ENCODE measurements at regions of chr12 and their contacts with region 1.

Region 1: GRCh38 chr12:45543906-45544315 is 185.6 kb upstream of the ARID2 start:
- DNase-seq: no peak
- H3K4me3 ChIP-seq: no peak overlapping the region
- H3K27ac ChIP-seq: no peak overlapping the region
- H3K4me1 ChIP-seq: peaks cover 0 to 8% (median 3%) of the 10 kb centered on the region in 6 donors
- H3K27me3 ChIP-seq: no peaks in the 10 kb centered on the region
- CTCF ChIP-seq: peak; percentile 50 to 83 (median 73)
- POLR2A ChIP-seq: no peak

Region 2: DNA sequence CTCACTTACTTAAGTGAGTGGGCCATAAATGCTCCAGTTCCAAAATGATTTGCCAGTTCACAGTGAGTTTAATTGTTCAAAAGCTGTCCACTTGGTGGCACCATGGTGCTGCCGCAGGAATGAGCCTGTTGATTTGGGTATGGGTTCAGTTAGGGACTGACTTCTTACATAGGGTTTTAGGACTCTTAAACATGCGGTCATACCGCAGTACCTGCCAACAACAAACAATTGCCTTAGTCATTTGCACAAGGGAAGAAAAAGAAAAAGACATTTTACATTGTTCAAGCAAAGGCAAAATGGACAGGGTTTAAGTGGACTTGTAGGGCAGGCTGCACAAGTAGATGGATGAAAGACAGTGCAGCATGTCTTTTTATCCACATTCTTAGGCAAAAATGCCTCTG is 413.0 kb before region 1 on chr12:
- intact Hi-C with region 1: no loop called
- DNase-seq: no peak
- H3K4me3 ChIP-seq: no peak overlapping the region
- H3K27ac ChIP-seq: no peak overlapping the region
- H3K4me1 ChIP-seq: no peaks in the 10 kb centered on the region
- H3K27me3 ChIP-seq: peaks cover 0 to 9% (median 0%) of the 10 kb centered on the region in 7 donors
- CTCF ChIP-seq: peak in 5 of 11 experiments; percentile 17 to 30 (median 22)
- POLR2A ChIP-seq: no peak

Region 3: GRCh38 chr12:45713078-45713477 is 169.2 kb after region 1 on chr12:
- intact Hi-C with region 1: loop called (anchors 10 kb)
- DNase-seq: no peak
- H3K4me3 ChIP-seq: no peak overlapping the region
- H3K27ac ChIP-seq: no peak overlapping the region
- H3K4me1 ChIP-seq: peaks cover 0 to 15% (median 0%) of the 10 kb centered on the region in 6 donors
- H3K27me3 ChIP-seq: no peaks in the 10 kb centered on the region
- CTCF ChIP-seq: no peak
- POLR2A ChIP-seq: no peak

Region 4: DNA sequence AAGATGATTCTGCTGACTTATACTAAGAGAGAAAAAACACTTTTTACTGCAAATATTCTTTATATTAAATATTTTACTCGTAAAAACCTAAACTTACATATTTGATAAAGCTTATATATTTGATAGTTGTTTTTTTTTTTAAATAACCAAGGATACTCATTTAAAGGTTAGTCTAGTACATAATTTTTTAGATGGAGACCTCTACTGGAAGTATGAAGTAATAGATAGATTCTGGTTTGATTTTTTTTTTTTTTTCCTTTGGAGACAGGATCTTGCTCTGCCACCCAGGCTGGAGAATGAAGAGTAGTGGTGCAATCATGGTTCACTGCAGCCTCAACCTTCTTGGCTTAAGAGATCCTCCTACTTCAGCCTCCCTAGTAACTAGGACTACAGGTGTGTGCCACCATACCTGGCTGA is 202.0 kb after region 1 on chr12:
- intact Hi-C with region 1: loop called (anchors 10 kb)
- DNase-seq: no peak
- H3K4me3 ChIP-seq: no peak overlapping the region
- H3K27ac ChIP-seq: no peak overlapping the region
- H3K4me1 ChIP-seq: peaks cover 0 to 82% (median 23%) of the 10 kb centered on the region in 6 donors
- H3K27me3 ChIP-seq: no peaks in the 10 kb centered on the region
- CTCF ChIP-seq: peak in 6 of 11 experiments; percentile 22 to 43 (median 29)
- POLR2A ChIP-seq: no peak